Ovary (tissue), 10 donors: ENCODE measurements at regions of chr11 and their contacts with region 1.

Region 1: GRCh38 chr11:35617687-35618496 is at the start of gene FJX1:
- DNase-seq: peak; percentile 66 to 78 (median 76)
- H3K4me3 ChIP-seq: peak within 1 kb of the TSS; percentile 39
- H3K27ac ChIP-seq: peak within 1 kb of the TSS; percentile 54 to 69
- H3K4me1 ChIP-seq: peaks cover 4% of the 10 kb centered on the region
- H3K27me3 ChIP-seq: no peaks in the 10 kb centered on the region
- CTCF ChIP-seq: no peak
- EP300 ChIP-seq: no peak
- POLR2A ChIP-seq: no peak
- total RNA-seq, gene FJX1: 6.4 to 40.2 (median 9.4) TPM

Region 2: DNA sequence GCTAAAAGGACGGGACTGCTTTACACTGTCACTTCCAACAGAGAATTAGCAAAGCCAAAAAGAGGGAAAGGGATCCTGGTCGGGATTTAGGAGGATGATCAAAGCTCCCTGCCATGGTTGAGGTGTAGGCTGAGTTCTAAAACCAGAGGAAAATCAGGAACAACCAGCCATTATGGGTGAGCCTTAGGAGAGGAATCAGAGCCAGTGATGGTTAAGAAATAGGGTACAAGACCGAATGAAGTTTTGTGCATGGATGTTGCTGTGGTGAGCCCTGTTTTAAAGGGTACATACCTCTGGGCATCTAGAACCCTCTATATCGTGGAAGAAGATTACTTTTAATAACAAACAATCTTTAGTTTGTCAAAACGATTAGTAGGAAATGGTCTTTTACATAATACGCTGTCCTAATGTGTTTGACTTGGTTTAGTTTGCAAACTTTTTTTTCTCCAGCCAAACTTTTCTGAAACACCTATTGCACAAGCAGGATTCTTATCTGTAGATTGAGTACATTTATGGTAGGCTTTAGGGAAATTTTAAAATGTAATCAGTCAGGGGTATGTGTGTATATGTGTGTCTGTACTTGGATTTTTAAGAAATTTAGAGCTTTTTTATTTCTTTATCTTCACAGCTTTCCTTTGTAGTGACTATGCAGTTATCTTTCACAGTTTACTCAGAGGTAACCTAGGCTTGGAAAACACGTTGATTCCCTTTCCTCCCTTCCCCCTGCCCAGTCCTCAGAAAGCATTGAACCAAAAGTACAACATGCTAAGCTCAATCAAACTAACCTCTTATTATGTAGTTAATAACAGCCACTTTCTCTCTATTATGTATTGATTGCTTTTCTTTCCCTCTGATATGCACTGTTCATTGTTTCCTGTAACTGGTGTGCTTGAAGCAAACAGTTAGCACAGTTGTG is 71.4 kb after region 1 on chr11:
- intact Hi-C with region 1: loop called in 1 of 4 experiments (anchors 2 kb)
- DNase-seq: no peak
- H3K4me3 ChIP-seq: no peak overlapping the region
- H3K27ac ChIP-seq: no peak overlapping the region
- H3K4me1 ChIP-seq: no peaks in the 10 kb centered on the region
- H3K27me3 ChIP-seq: no peaks in the 10 kb centered on the region
- CTCF ChIP-seq: no peak
- EP300 ChIP-seq: no peak
- POLR2A ChIP-seq: no peak

Region 3: GRCh38 chr11:36131721-36132397 is 514.0 kb after region 1 on chr11:
- intact Hi-C with region 1: loop called in 3 of 4 experiments (anchors 2 to 10 kb)
- DNase-seq: peak; percentile 63 to 76 (median 71)
- H3K4me3 ChIP-seq: no peak overlapping the region
- H3K27ac ChIP-seq: no peak overlapping the region
- H3K4me1 ChIP-seq: no peaks in the 10 kb centered on the region
- H3K27me3 ChIP-seq: no peaks in the 10 kb centered on the region
- CTCF ChIP-seq: peak; percentile 44 to 75 (median 54)
- EP300 ChIP-seq: no peak
- POLR2A ChIP-seq: no peak

Region 4: DNA sequence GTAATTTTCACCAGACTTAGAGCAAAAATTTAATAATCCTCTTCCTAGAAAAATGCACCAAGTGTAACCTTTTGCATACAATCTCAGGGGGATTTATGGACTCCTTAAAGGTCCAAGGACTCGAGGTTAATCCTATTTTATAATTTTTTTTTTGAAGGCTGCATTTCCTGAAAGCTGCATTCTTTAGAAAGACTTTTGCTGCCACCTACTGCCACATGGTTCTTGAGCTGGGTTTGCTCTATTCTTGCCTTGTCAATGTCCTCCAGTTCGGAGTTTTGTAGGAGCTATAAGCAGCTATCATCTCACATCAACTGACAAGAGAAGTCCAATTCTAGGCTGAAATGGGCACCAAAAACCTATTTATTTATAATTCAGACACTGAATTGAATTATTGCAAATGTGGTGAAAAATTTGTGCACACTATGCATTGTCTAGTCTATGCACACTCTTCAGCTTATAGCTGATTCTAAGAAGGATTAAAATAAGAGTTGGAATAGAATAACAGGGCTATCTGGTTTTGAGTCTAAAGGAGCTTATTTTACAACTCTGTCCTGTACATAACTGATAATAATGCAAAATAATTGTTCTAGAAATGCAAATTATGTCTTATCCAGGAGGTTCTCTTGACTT is 860.9 kb after region 1 on chr11:
- intact Hi-C with region 1: loop called in 1 of 4 experiments (anchors 10 kb)
- DNase-seq: peak in 1 of 5 donors; percentile 56
- H3K4me3 ChIP-seq: no peak overlapping the region
- H3K27ac ChIP-seq: no peak overlapping the region
- H3K4me1 ChIP-seq: no peaks in the 10 kb centered on the region
- H3K27me3 ChIP-seq: no peaks in the 10 kb centered on the region
- CTCF ChIP-seq: peak in 2 of 3 donors; percentile 49 to 53
- EP300 ChIP-seq: no peak
- POLR2A ChIP-seq: no peak